Posterior cingulate gyrus (tissue), 11 donors: ENCODE measurements at regions of chr15 and their contacts with region 1.

Region 1: GRCh38 chr15:74322181-74323076 is 45.0 kb downstream of the CYP11A1 start:
- DNase-seq: peak; percentile 58 to 96 (median 71)

Region 2: DNA sequence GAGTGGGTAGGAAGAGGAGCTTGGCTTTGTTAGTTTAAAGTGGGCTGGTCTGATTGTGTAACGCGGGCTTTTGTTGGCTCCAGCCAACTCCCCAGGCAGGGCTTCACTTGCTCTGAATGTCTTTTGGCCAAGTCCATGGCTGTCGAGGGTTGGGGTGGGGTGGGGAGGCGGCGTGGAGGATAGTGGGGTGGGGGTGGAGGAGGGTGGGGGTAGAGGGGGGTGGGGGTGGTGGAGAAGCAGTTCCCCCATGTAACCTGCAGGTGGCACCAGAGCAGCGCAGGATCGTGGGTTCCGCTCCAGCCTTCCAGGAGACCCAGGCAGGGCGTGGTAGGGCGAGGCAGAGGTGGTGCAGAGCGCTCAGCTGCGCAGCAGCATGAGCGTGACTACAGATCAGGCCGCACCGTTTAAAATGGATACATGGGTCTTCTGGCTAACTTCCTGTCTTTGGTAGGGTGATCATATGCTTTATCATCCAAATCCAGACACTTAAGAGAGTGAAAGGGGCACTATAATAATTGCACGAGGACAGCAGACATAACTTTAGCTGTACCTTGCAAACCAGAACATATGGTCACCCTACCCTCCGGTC is 268.4 kb before region 1 on chr15:
- intact Hi-C with region 1: loop called (anchors 10 kb)
- DNase-seq: peak; percentile 26 to 94 (median 66)